CD4-positive, alpha-beta T cell (primary cell): ENCODE measurements at regions of chr3 and their contacts with region 1.

Region 1: GRCh38 chr3:179278932-179279693 is 28.2 kb upstream of the KCNMB3 start:
- DNase-seq: no peak
- ATAC-seq: no peak
- H3K4me3 ChIP-seq: no peak overlapping the region
- H3K4me3 Mint-ChIP-seq: no peak overlapping the region
- H3K27ac ChIP-seq: no peak overlapping the region
- H3K27ac Mint-ChIP-seq: no peak overlapping the region
- H3K4me1 ChIP-seq: no peaks in the 10 kb centered on the region
- H3K4me1 Mint-ChIP-seq: no peaks in the 10 kb centered on the region
- H3K27me3 ChIP-seq: peaks cover 8% of the 10 kb centered on the region in 2 experiments
- H3K27me3 Mint-ChIP-seq: peaks cover 48% of the 10 kb centered on the region
- CTCF ChIP-seq: no peak

Region 2: DNA sequence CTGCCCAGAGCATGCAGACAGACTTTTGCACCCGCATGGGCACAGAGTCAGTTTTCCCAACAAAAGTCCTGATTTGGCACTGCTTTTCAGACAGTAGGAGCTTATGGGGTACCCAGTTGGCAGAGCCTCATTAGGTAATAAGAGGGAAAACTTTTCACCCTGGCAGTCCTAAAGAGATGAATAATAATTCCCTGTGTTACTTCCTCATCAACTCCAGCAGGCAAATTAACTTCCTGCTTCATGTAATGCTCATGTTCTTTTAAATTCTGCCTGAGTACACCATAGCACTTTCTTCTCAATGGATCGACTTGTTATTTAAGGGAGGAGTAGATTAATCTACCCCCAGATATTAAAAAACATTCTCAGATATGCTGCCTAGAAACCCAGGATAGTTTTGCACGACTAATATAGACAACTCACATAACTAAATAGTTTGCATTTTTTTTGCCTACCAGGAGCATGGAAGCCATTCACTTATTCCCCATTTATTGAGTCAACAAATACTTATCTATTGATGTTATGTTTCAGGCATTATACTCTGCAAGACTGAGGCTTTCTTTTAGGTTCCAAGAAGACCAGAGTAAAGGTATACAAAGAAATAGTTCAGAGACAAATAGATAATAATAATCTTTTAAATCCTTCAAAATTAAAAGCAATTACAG is 528.3 kb before region 1 on chr3:
- CTCF ChIA-PET with region 1: no interaction called
- POLR2A ChIA-PET with region 1: no interaction called
- intact Hi-C with region 1: no loop called
- DNase-seq: no peak
- ATAC-seq: no peak
- H3K4me3 ChIP-seq: no peak overlapping the region
- H3K4me3 Mint-ChIP-seq: no peak overlapping the region
- H3K27ac ChIP-seq: no peak overlapping the region
- H3K27ac Mint-ChIP-seq: no peak overlapping the region
- H3K4me1 ChIP-seq: no peaks in the 10 kb centered on the region
- H3K4me1 Mint-ChIP-seq: no peaks in the 10 kb centered on the region
- H3K27me3 ChIP-seq: no peaks in the 10 kb centered on the region
- H3K27me3 Mint-ChIP-seq: no peaks in the 10 kb centered on the region
- CTCF ChIP-seq: no peak

Region 3: DNA sequence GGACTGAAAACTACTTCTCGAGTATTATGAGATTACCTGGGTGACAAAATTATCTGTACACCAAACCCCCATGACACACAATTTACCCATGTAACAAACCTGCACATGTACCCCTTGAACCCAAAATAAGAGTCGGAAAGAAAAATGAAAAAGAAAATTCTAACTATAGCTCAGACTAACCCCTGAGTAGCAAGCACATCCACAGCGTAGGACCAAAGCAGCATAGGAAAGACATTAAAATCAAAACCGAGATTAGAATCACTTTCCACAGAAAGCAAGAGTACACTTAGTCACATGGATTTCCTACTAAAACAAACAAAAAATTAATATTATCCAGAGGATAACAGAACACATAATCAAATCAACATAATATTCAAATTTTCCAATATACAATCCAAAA is 137.2 kb before region 1 on chr3:
- CTCF ChIA-PET with region 1: no interaction called
- POLR2A ChIA-PET with region 1: no interaction called
- intact Hi-C with region 1: loop called in 1 of 2 experiments (anchors 5 kb)
- DNase-seq: no peak
- ATAC-seq: no peak
- H3K4me3 ChIP-seq: no peak overlapping the region
- H3K4me3 Mint-ChIP-seq: no peak overlapping the region
- H3K27ac ChIP-seq: no peak overlapping the region
- H3K27ac Mint-ChIP-seq: no peak overlapping the region
- H3K4me1 ChIP-seq: no peaks in the 10 kb centered on the region
- H3K4me1 Mint-ChIP-seq: peaks cover 3% of the 10 kb centered on the region
- H3K27me3 ChIP-seq: no peaks in the 10 kb centered on the region
- H3K27me3 Mint-ChIP-seq: peaks cover 17% of the 10 kb centered on the region
- CTCF ChIP-seq: no peak